Dorsolateral prefrontal cortex (tissue), 120 donors: ENCODE measurements at regions of chr7 and their contacts with region 1.

Region 1: GRCh38 chr7:48046458-48046857 is 11.1 kb downstream of the C7orf57 start:
- DNase-seq: no peak
- H3K4me3 ChIP-seq: no peak overlapping the region
- H3K27ac ChIP-seq: no peak overlapping the region
- H3K27me3 ChIP-seq: no peaks in the 10 kb centered on the region
- CTCF ChIP-seq: no peak

Region 2: GRCh38 chr7:47999418-47999817 is 47.0 kb before region 1 on chr7:
- intact Hi-C with region 1: loop called in 1 of 2 experiments (anchors 5 kb)
- DNase-seq: no peak
- H3K4me3 ChIP-seq: no peak overlapping the region
- H3K27ac ChIP-seq: no peak overlapping the region
- H3K27me3 ChIP-seq: peaks cover 0 to 3% (median 0%) of the 10 kb centered on the region in 45 donors
- CTCF ChIP-seq: no peak

Region 3: GRCh38 chr7:48209004-48209600 is 162.6 kb after region 1 on chr7:
- intact Hi-C with region 1: no loop called
- DNase-seq: no peak
- H3K4me3 ChIP-seq: no peak overlapping the region
- H3K27ac ChIP-seq: no peak overlapping the region
- H3K27me3 ChIP-seq: peaks cover 0 to 3% (median 0%) of the 10 kb centered on the region in 45 donors
- CTCF ChIP-seq: no peak